HepG2 (cell line): ENCODE measurements at regions of chr2 and their contacts with region 1.

Region 1: DNA sequence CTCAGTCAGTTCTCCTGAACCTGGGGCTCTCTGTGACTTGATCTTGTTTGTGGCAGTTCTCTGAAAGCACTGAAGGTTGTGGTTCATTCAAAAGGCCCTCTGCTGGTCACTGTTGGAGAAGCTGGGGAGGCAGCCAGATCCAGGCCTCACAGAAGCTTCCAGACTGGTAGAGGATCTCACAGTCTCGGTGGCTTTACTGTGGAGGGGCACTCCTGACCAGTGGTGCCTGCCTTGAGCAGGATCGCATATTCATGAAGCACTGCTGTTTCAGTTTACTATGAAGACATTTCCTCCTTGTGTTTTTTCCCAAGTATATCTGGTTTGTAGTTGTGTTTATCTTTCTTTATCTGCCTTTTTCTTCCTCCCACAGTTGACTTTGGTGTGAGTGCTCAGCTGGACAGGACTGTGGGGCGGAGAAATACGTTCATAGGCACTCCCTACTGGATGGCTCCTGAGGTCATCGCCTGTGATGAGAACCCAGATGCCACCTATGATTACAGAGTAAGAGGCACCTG is 133.9 kb downstream of the MAP4K4 start:
- DNase-seq: peak; percentile 77
- ATAC-seq: peak; percentile 92
- H3K4me3 ChIP-seq: no peak overlapping the region
- H3K27ac ChIP-seq: peak overlapping the region; percentile 3
- H3K4me1 ChIP-seq: peaks cover 50% of the 10 kb centered on the region
- H3K27me3 ChIP-seq: no peaks in the 10 kb centered on the region
- CTCF ChIP-seq: peak; percentile 87
- EP300 ChIP-seq: no peak
- POLR2A ChIP-seq: no peak
- RAD21 ChIP-seq: peak; percentile 71

Region 2: DNA sequence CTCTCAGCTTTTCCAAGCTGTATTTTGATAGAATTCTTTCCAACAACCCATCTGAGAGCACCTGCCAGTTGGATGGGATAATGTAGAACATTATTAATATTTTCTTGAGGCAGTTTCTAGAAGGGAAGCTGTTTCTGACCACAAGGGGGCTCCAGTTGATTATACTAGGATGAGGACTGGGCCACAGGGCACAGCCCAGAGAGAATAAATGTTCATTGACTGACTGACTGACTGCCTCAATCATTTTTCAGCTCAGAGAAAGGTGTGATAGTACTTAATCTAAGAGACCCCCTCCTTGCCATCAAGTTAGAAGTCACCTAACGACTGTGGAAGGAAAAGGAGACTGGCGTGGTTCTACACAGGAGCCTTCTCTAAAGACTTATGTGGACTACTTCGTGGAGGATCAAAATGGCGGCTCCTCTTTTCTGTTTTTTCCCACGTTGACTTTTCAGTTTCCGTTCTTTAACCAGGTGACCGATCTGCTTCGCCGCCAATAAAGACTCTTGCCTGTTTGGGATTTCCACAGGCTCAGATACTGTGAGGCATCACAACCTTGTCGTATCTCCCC is 412.2 kb before region 1 on chr2:
- CTCF ChIA-PET with region 1: interaction called, 18 read pairs
- POLR2A ChIA-PET with region 1: no interaction called
- in situ Hi-C with region 1: no loop called
- intact Hi-C with region 1: loop called (anchors 1 kb)
- DNase-seq: peak; percentile 71
- ATAC-seq: peak; percentile 85
- H3K4me3 ChIP-seq: no peak overlapping the region
- H3K27ac ChIP-seq: no peak overlapping the region
- H3K4me1 ChIP-seq: no peaks in the 10 kb centered on the region
- H3K27me3 ChIP-seq: peaks cover 3 to 21% of the 10 kb centered on the region in 2 experiments; a peak in 4 of 5 replicates
- CTCF ChIP-seq: peak; percentile 78
- EP300 ChIP-seq: no peak
- POLR2A ChIP-seq: no peak
- RAD21 ChIP-seq: peak; percentile 81

Region 3: DNA sequence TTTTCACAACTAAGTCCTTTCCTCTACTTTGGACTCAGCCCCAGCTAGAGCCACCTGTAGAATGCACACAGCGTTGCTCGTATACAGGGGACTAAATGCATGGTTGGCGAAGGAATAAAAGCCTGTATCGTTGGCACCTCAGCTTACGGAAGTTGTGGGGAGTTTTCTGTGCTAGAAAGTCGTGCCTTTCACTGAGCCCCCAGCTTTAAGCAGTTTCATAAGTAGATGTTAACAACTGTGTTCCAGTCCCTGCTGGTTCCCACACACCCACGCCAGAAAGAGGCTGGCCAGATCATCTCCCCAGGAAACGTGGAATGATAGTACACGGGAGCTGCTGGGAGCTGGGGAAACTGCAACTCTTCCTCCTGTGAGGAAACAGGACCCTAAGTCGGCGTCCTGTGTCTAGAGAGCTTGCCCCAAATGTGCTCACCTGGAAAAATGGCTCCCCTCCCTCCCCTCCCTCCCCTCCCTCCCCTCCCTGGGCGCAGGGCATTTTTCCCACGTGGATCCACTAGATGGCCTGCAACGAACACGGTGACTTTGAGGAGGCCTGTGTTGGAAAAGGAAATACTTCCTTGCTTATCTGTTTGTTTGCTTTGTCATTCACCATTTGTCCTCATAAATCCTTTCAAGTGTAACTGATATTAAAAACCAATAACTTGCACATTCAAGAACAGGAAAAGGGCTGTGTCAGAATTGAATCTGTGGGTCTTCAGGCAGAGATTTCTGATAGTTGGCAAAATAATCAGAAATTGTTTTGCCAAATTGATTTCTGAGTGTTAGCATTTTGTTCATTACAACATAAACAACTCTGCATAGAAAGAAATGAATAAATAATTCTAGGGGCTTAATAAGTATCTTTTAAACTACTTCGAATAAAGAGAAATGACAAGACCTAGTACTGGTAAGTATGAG is 312.6 kb before region 1 on chr2:
- CTCF ChIA-PET with region 1: no interaction called
- POLR2A ChIA-PET with region 1: no interaction called
- in situ Hi-C with region 1: no loop called
- intact Hi-C with region 1: loop called (anchors 5 kb)
- DNase-seq: peak; percentile 78
- ATAC-seq: peak; percentile 87
- H3K4me3 ChIP-seq: peak overlapping the region; percentile 23 to 51 (median 25); a peak in 5 of 6 replicates
- H3K27ac ChIP-seq: no peak overlapping the region
- H3K4me1 ChIP-seq: peaks cover 51% of the 10 kb centered on the region
- H3K27me3 ChIP-seq: no peaks in the 10 kb centered on the region
- CTCF ChIP-seq: peak; percentile 82
- EP300 ChIP-seq: no peak; a peak in 1 of 4 replicates
- POLR2A ChIP-seq: no peak
- RAD21 ChIP-seq: peak; percentile 49

Region 4: DNA sequence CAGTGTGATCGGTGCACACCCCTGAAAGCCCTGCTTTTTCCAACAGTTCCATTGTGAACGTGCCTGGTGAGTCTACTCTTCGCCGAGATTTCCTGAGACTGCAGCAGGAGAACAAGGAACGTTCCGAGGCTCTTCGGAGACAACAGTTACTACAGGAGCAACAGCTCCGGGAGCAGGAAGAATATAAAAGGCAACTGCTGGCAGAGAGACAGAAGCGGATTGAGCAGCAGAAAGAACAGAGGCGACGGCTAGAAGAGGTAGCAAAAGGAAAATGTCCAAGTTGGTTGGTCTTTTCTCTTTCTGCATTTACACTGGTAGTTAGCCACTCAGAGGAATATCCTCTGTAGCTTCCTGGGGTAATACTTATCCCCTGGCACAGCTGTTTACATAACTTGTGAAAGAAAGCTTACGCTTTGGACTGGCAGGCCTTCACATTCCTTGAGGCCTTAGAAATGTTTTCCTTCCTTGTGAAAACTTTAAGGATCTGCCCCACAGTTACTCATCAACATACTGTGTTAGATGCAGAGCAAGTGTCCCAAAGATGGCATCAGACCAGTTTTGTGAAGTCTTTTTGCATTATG is 12.7 kb after region 1 on chr2:
- CTCF ChIA-PET with region 1: no interaction called
- POLR2A ChIA-PET with region 1: no interaction called
- in situ Hi-C with region 1: no loop called
- intact Hi-C with region 1: no loop called
- DNase-seq: no peak
- ATAC-seq: no peak
- H3K4me3 ChIP-seq: no peak overlapping the region
- H3K27ac ChIP-seq: no peak overlapping the region
- H3K4me1 ChIP-seq: peaks cover 15% of the 10 kb centered on the region
- H3K27me3 ChIP-seq: no peaks in the 10 kb centered on the region
- CTCF ChIP-seq: no peak
- EP300 ChIP-seq: no peak
- POLR2A ChIP-seq: no peak
- RAD21 ChIP-seq: no peak

Region 5: DNA sequence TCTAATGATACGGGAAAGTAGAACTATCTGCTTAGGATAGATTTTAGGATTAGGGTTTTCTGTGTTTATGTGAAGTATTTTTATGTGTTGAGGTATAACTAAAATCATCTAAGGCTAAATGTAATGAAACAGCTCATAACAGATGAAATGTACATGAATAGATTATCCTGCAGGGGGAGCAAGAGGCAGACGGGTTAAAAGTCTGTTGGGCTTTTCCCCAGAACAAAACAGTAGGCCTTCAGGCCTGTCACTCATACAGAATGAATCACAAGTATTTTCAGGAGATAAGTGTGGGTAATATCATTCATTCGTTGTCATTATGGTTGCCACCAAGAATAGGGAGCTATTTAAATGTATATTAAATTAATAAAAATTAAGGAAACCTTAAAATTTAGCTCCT is 52.5 kb after region 1 on chr2:
- CTCF ChIA-PET with region 1: no interaction called
- POLR2A ChIA-PET with region 1: no interaction called
- in situ Hi-C with region 1: no loop called
- intact Hi-C with region 1: no loop called
- DNase-seq: peak; percentile 60
- ATAC-seq: peak; percentile 73
- H3K4me3 ChIP-seq: no peak overlapping the region
- H3K27ac ChIP-seq: no peak overlapping the region
- H3K4me1 ChIP-seq: no peaks in the 10 kb centered on the region
- H3K27me3 ChIP-seq: no peaks in the 10 kb centered on the region
- CTCF ChIP-seq: peak; percentile 68
- EP300 ChIP-seq: no peak
- POLR2A ChIP-seq: no peak
- RAD21 ChIP-seq: peak; percentile 59